Stomach (tissue), 19 donors: ENCODE measurements at regions of chr6 and their contacts with region 1.

Region 1: GRCh38 chr6:165850434-165851019 is 187.5 kb upstream of the PDE10A start:
- DNase-seq: peak; percentile 78 to 89
- H3K4me3 ChIP-seq: no peak overlapping the region
- H3K27ac ChIP-seq: no peak overlapping the region
- H3K4me1 ChIP-seq: peaks cover 4 to 31% (median 22%) of the 10 kb centered on the region in 4 donors
- H3K27me3 ChIP-seq: peaks cover 0 to 60% (median 20%) of the 10 kb centered on the region in 3 donors
- CTCF ChIP-seq: peak in 5 of 7 experiments; percentile 85 to 99 (median 98)
- EP300 ChIP-seq: no peak
- POLR2A ChIP-seq: no peak

Region 2: DNA sequence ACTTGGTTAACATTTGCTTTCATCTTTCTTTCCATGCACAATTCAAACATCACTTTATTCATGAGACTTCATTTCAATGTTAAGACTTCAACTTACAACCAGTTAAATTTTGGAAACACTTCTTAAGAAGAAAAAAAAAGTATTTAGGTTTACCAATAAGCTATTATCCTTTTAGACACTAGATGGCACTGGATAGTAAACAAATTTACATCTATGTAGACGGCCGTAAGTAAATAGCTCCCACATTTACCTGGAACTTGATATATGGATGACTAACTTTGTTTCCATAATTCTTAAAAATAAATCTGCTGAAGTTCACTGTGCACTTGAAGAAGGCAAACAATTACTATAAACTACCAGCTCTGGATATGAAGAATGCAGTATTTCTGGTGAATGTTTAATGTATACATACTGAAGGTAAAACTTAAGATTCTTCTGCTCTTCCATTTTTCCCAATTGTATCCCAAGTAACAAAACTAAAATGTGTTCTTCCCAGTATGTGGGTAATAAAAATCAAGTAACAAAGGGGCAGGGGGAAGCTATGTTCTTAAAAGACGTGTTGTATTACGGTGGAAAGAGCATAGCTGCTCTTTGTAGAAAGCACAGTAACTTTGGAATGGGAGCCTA is 410.5 kb before region 1 on chr6:
- intact Hi-C with region 1: loop called (anchors 10 kb)
- DNase-seq: peak in 1 of 2 donors; percentile 75
- H3K4me3 ChIP-seq: no peak overlapping the region
- H3K27ac ChIP-seq: no peak overlapping the region
- H3K4me1 ChIP-seq: no peaks in the 10 kb centered on the region
- H3K27me3 ChIP-seq: no peaks in the 10 kb centered on the region
- CTCF ChIP-seq: peak in 5 of 7 experiments; percentile 13 to 44 (median 40)
- EP300 ChIP-seq: no peak
- POLR2A ChIP-seq: no peak

Region 3: DNA sequence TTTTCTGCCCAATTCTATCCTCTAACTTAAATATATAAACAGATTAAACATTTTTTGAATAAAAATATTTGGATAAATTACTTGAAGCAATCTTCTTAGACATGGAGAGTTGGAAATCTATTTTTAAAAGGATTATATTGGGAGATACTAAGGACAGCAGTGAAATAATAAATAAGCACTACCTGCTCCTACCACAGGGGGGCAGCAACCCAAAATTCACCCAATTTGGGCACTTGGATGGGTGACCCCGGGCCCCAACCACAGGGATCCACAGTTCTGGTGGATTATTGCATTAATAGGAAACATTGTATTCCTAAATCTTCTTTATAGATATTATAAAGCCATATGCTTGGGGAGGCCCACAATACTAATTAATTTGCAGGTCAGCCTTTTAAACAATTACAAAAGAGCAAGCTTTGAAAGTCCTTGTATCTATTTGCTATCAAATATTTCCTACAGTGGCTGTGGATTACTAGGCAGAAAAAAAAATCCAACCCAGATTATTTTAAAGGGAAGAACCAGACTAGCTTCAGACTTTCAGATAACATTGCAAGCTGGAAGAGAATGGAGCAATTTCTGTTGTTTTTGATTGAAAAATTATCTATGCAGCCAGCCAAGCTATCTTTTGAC is 121.1 kb before region 1 on chr6:
- intact Hi-C with region 1: loop called (anchors 5 kb)
- DNase-seq: peak; percentile 38 to 44
- H3K4me3 ChIP-seq: no peak overlapping the region
- H3K27ac ChIP-seq: no peak overlapping the region
- H3K4me1 ChIP-seq: no peaks in the 10 kb centered on the region
- H3K27me3 ChIP-seq: no peaks in the 10 kb centered on the region
- CTCF ChIP-seq: peak in 5 of 7 experiments; percentile 40 to 83 (median 60)
- EP300 ChIP-seq: no peak
- POLR2A ChIP-seq: no peak